ENCODE measurements at regions of chr4 and their contacts with region 1.

Region 1: DNA sequence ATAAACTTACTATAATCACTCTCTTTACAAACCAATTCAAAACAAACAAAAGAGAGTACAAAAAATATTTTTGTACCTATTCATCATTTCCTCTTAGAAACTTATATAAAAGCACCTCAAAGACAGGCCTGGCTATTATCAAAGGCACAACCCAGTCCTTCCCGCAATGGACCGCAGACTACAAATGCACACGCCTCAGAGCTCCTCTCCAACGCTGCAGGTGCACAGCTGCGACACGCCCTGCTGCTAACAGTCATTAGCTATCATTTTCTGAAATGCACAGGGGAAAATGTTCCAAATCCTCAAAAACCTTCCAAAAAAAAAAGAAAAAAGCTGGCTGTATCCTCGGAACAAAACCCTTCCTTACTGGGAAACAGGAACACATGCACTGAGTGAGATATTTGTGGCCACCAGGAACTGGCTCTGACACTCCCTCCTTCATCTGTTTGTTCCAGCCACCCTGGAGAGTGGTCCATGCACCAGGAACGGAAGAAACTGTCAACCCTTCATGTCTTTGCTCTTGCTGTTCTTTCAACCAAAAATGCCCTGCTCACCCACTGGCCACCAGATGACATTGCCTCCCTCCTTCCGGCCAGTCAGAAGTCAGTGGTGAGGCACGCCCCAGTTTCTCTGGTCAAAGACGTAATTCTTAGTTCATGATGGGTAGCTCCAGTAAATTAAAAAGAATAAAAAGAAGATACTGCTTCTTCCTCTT is 16.7 kb downstream of the IRF2 start:
- DNase-seq: no peak
- H3K4me3 ChIP-seq: no peak overlapping the region
- H3K27ac ChIP-seq: no peak overlapping the region
- H3K4me1 ChIP-seq: peaks cover 0 to 53% (median 36%) of the 10 kb centered on the region in 4 donors
- H3K27me3 ChIP-seq: no peaks in the 10 kb centered on the region
- CTCF ChIP-seq: no peak

Region 2: GRCh38 chr4:184384810-184385557 is 72.7 kb before region 1 on chr4:
- intact Hi-C with region 1: loop called (anchors 5 kb)
- DNase-seq: no peak
- H3K4me3 ChIP-seq: peak overlapping the region; percentile 32 to 46
- H3K27ac ChIP-seq: peak overlapping the region; percentile 74 to 78
- H3K4me1 ChIP-seq: peaks cover 4 to 45% (median 29%) of the 10 kb centered on the region in 4 donors
- H3K27me3 ChIP-seq: no peaks in the 10 kb centered on the region
- CTCF ChIP-seq: no peak

Region 3: DNA sequence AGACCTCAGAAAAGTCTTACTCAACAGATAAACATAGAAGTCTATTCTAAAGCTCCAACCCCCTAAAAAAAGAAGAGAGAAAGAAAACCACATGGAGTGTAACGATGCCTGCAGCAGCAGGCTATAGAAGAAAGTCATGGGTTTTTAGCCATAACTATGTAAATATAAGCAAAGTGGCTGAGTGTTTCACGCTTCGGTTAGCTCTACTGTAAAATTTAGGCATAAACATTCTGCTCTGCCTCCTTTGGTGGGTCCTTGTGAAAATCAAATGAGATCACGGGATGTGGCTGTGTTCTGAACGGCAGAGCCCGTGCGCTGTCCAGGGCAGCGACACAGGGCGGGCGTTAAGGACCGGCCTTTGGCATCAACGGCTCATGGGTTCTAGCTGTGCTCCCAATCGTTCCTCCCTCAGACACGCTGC is 61.7 kb before region 1 on chr4:
- intact Hi-C with region 1: no loop called
- DNase-seq: no peak
- H3K4me3 ChIP-seq: no peak overlapping the region
- H3K27ac ChIP-seq: peak overlapping the region in 1 of 2 donors; percentile 25
- H3K4me1 ChIP-seq: peaks cover 0 to 41% (median 3%) of the 10 kb centered on the region in 4 donors
- H3K27me3 ChIP-seq: no peaks in the 10 kb centered on the region
- CTCF ChIP-seq: no peak

Measured in tibial artery (tissue), 4 donors.